Heart right ventricle (tissue), 16 donors: ENCODE measurements at regions of chr3 and their contacts with region 1.

Region 1: GRCh38 chr3:114056130-114057010 is at the starts of genes CCDC191 and QTRT2:
- DNase-seq: peak; percentile 96 to 100
- ATAC-seq: peak; percentile 99 to 100 (median 100)
- H3K4me3 ChIP-seq: peak within 1 kb of the TSS; percentile 58 to 85 (median 72)
- H3K27ac ChIP-seq: peak within 1 kb of the TSS; percentile 16 to 89 (median 82)
- H3K4me1 ChIP-seq: peaks cover 0 to 31% (median 16%) of the 10 kb centered on the region in 9 donors
- H3K27me3 ChIP-seq: no peaks in the 10 kb centered on the region
- CTCF ChIP-seq: no peak
- total RNA-seq, gene CCDC191: 0.68 to 3.6 (median 1.8) TPM
- total RNA-seq, gene QTRT2: 3.6 to 9.7 (median 5.2) TPM

Region 2: DNA sequence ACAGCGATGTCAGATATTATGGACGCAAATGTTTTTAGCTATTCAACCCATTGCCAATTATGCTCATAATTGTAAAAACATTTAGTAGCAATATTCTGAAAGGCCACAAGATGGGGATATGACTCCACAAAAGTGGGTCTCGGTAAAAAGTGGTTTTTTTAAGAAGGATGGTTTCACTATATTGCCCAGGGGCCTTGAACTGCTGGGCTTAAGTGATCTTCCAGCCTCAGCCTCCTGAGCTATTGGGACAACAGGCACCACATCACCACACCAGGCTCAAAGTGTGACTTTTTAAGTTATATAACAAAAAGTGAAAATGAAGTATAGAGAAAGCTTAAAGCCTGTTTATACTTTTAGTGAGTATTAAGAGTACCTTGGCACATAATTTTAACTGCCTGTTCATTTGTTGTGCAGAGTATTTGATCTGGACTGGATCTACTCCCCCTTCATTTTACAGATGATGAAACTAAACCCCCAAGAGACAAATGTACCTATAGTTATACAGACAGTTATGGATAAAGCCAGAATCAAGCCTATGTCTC is 319.8 kb before region 1 on chr3:
- intact Hi-C with region 1: loop called in 2 of 10 experiments (anchors 5 to 10 kb)
- DNase-seq: peak in 1 of 2 donors; percentile 26
- ATAC-seq: peak in 7 of 8 donors; percentile 55 to 83 (median 74)
- H3K4me3 ChIP-seq: no peak overlapping the region
- H3K27ac ChIP-seq: peak overlapping the region in 2 of 10 donors; percentile 0 to 6
- H3K4me1 ChIP-seq: peaks cover 0 to 43% (median 36%) of the 10 kb centered on the region in 9 donors
- H3K27me3 ChIP-seq: no peaks in the 10 kb centered on the region
- CTCF ChIP-seq: peak; percentile 52 to 80 (median 73)

Region 3: GRCh38 chr3:113947372-113948014 is 108.9 kb before region 1 on chr3 and contains the start of gene ZDHHC23:
- intact Hi-C with region 1: loop called in 2 of 10 experiments (anchors 5 to 10 kb)
- DNase-seq: peak; percentile 47 to 79
- ATAC-seq: peak; percentile 83 to 93 (median 88)
- H3K4me3 ChIP-seq: peak within 1 kb of the TSS; percentile 60 to 88 (median 73)
- H3K27ac ChIP-seq: peak within 1 kb of the TSS in 5 of 10 donors; percentile 7 to 56 (median 30)
- H3K4me1 ChIP-seq: peaks cover 0 to 16% (median 11%) of the 10 kb centered on the region in 9 donors
- H3K27me3 ChIP-seq: peaks cover 0 to 12% (median 0%) of the 10 kb centered on the region in 7 donors
- CTCF ChIP-seq: no peak
- total RNA-seq, gene ZDHHC23: 1.1 to 3.7 (median 2.4) TPM